Activated CD4-positive, alpha-beta memory T cell treated with anti-CD3 and anti-CD28 coated beads for 36 hours (primary cell): ENCODE measurements at regions of chr17 and their contacts with region 1.

Region 1: DNA sequence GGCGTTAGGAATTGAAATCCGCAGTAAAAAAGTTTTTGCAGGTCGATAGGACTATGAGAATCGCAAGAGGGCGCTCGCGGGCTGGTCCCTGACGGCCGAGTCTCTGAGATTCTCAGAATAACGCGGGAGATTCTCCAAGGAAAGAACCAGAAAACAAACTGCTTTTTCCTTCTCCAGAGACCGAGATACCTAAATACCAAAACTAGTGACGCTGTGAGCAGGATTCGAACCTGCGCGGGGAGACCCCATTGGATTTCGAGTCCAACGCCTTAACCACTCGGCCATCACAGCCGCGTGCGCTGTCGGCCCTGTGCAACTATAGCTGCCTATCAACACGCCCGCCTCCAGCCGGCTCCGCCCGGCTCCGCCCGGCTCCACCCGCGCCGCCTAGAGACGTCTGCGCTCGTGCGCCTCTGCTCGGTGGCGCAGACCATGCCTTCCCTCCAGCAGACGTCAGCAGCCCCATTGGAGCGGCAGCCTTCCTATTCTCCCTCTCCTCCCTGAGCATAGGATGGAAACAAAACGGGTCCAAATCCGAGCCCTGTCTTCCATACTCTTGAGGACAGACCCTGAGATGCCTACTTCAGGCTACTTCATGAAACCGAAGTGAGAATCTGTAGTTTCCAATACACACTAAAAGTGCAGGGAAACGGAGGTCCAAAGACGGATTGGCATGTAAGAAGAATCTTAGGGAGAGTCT is 13.4 kb downstream of the PER1 start:
- DNase-seq: peak; percentile 98
- H3K4me3 Mint-ChIP-seq: no peak overlapping the region
- H3K27ac Mint-ChIP-seq: no peak overlapping the region
- H3K4me1 Mint-ChIP-seq: peaks cover 2% of the 10 kb centered on the region
- H3K27me3 Mint-ChIP-seq: peaks cover 1% of the 10 kb centered on the region

Region 2: GRCh38 chr17:8125157-8125946 is 13.5 kb before region 1 on chr17:
- CTCF ChIA-PET with region 1: interaction called, 35 read pairs
- POLR2A ChIA-PET with region 1: interaction called, 8 read pairs
- intact Hi-C with region 1: loop called (anchors 1 kb)
- DNase-seq: peak; percentile 94
- H3K4me3 Mint-ChIP-seq: peak overlapping the region; percentile 83
- H3K27ac Mint-ChIP-seq: peak overlapping the region; percentile 89
- H3K4me1 Mint-ChIP-seq: peaks cover 50% of the 10 kb centered on the region
- H3K27me3 Mint-ChIP-seq: peaks cover 37% of the 10 kb centered on the region

Region 3: GRCh38 chr17:8151123-8151640 is 12.4 kb after region 1 on chr17:
- CTCF ChIA-PET with region 1: interaction called, 26 read pairs
- POLR2A ChIA-PET with region 1: interaction called, 34 read pairs
- intact Hi-C with region 1: loop called (anchors 1 kb)
- DNase-seq: peak; percentile 92
- H3K4me3 Mint-ChIP-seq: peak overlapping the region; percentile 83
- H3K27ac Mint-ChIP-seq: no peak overlapping the region
- H3K4me1 Mint-ChIP-seq: peaks cover 35% of the 10 kb centered on the region
- H3K27me3 Mint-ChIP-seq: no peaks in the 10 kb centered on the region

Region 4: GRCh38 chr17:8156246-8156992 is 17.6 kb after region 1 on chr17:
- CTCF ChIA-PET with region 1: interaction called, 37 read pairs
- POLR2A ChIA-PET with region 1: interaction called, 34 read pairs
- intact Hi-C with region 1: loop called (anchors 1 kb)
- DNase-seq: peak; percentile 100
- H3K4me3 Mint-ChIP-seq: no peak overlapping the region
- H3K27ac Mint-ChIP-seq: no peak overlapping the region
- H3K4me1 Mint-ChIP-seq: peaks cover 56% of the 10 kb centered on the region
- H3K27me3 Mint-ChIP-seq: no peaks in the 10 kb centered on the region

Region 5: GRCh38 chr17:8222630-8223356 is 84.0 kb after region 1 on chr17:
- CTCF ChIA-PET with region 1: interaction called, 6 read pairs
- POLR2A ChIA-PET with region 1: interaction called, 4 read pairs
- intact Hi-C with region 1: loop called (anchors 1 kb)
- DNase-seq: peak; percentile 94
- H3K4me3 Mint-ChIP-seq: peak overlapping the region; percentile 98
- H3K27ac Mint-ChIP-seq: peak overlapping the region; percentile 98
- H3K4me1 Mint-ChIP-seq: peaks cover 47% of the 10 kb centered on the region
- H3K27me3 Mint-ChIP-seq: peaks cover 14% of the 10 kb centered on the region

Region 6: GRCh38 chr17:8294814-8295316 is 156.0 kb after region 1 on chr17:
- CTCF ChIA-PET with region 1: interaction called, 4 read pairs
- POLR2A ChIA-PET with region 1: no interaction called
- intact Hi-C with region 1: loop called (anchors 1 kb)
- DNase-seq: no peak
- H3K4me3 Mint-ChIP-seq: peak overlapping the region; percentile 80
- H3K27ac Mint-ChIP-seq: peak overlapping the region; percentile 77
- H3K4me1 Mint-ChIP-seq: peaks cover 33% of the 10 kb centered on the region
- H3K27me3 Mint-ChIP-seq: no peaks in the 10 kb centered on the region

Region 7: DNA sequence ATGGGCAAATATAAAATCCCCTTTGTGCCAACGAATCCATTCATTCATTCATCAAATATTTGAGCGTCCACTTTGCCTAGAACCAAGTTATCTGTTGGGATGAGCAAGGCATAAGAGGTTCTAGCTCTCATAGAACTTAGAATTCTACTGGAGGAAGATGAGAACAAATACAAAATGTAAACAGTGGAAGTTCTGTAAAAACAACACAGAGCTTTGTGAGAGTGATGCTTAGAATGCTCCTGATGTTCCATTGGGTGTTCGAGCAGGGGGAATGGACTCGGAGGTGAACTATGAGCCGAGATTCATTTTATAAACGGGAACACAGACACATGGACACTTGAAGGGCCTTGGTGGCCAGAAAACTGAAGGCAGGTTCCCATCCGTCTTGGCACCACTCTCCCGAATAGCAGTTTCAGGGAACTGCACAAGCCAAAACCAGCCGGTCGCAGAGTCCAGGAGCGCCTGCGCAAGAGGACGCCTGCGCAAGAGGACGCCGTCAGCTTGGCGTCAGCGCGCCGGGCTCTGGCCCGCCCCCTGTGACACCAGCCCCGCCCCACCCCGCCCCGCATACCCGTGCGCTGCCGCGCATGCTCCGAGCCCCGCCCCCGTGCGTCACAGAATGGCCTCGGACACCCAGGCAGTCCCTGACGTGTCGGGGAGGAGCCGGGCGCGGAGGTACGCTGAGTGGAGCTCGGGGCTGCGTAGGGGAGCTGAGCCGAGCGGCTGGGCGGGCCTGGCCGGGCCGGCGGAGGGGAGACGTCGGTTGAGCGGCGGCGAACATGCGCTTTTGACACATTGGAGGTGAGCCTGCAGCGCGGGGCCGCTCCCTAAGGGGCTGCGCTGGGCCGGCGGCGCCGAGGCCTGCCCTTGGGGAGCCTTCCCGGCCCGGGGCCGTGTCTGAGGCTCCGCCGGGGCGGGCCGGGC is 296.7 kb after region 1 on chr17 and contains the start of gene NDEL1:
- CTCF ChIA-PET with region 1: no interaction called
- POLR2A ChIA-PET with region 1: no interaction called
- intact Hi-C with region 1: loop called (anchors 5 kb)
- DNase-seq: peak; percentile 99
- H3K4me3 Mint-ChIP-seq: peak within 1 kb of the TSS; percentile 92
- H3K27ac Mint-ChIP-seq: peak within 1 kb of the TSS; percentile 91
- H3K4me1 Mint-ChIP-seq: peaks cover 31% of the 10 kb centered on the region
- H3K27me3 Mint-ChIP-seq: no peaks in the 10 kb centered on the region
- total RNA-seq, gene NDEL1: 58.0 to 62.8 TPM